ENCODE measurements at regions of chr11 and their contacts with region 1.

Region 1: GRCh38 chr11:33742249-33742851 is 6.1 kb upstream of the CD59 start:
- DNase-seq: no peak
- ATAC-seq: peak; percentile 76 to 82; a peak in 4 of 6 replicates
- H3K4me3 ChIP-seq: no peak overlapping the region
- H3K27ac ChIP-seq: peak overlapping the region; percentile 16; a peak in 2 of 6 replicates
- H3K4me1 ChIP-seq: peaks cover 21% of the 10 kb centered on the region
- CTCF ChIP-seq: peak; percentile 77
- EP300 ChIP-seq: no peak
- POLR2A ChIP-seq: no peak
- RAD21 ChIP-seq: peak; percentile 73 to 86

Region 2: GRCh38 chr11:33362051-33362910 is 380.1 kb before region 1 on chr11:
- CTCF ChIA-PET with region 1: interaction called, 23 read pairs
- POLR2A ChIA-PET with region 1: no interaction called
- DNase-seq: peak; percentile 15 to 47
- ATAC-seq: peak; percentile 33 to 75; a peak in 4 of 6 replicates
- H3K4me3 ChIP-seq: no peak overlapping the region
- H3K27ac ChIP-seq: no peak overlapping the region
- H3K4me1 ChIP-seq: no peaks in the 10 kb centered on the region
- CTCF ChIP-seq: peak; percentile 83
- EP300 ChIP-seq: no peak
- POLR2A ChIP-seq: no peak
- RAD21 ChIP-seq: peak; percentile 85 to 92

Region 3: DNA sequence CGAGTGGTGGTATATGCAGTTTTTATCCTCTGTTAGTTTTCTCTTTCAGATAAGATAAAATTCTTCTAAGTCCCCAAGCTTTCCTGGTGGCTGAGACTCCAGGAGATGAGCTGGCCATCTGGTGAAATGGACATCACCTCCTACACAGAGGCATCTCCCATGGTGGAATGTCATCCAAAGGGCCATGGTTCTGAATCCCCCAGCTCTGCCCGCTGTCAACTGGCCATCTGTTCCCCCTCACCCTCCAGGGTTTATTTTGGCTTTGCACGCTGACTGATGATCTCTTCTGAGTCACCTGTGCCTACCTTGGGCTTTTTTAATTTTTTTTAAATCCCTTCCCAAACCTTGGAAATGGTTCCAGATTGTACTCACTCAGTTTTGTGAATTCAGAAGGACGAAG is 342.9 kb before region 1 on chr11:
- CTCF ChIA-PET with region 1: no interaction called
- POLR2A ChIA-PET with region 1: no interaction called
- DNase-seq: no peak
- ATAC-seq: no peak
- H3K4me3 ChIP-seq: no peak overlapping the region
- H3K27ac ChIP-seq: no peak overlapping the region
- H3K4me1 ChIP-seq: no peaks in the 10 kb centered on the region
- CTCF ChIP-seq: no peak
- EP300 ChIP-seq: no peak
- POLR2A ChIP-seq: no peak
- RAD21 ChIP-seq: no peak

Region 4: DNA sequence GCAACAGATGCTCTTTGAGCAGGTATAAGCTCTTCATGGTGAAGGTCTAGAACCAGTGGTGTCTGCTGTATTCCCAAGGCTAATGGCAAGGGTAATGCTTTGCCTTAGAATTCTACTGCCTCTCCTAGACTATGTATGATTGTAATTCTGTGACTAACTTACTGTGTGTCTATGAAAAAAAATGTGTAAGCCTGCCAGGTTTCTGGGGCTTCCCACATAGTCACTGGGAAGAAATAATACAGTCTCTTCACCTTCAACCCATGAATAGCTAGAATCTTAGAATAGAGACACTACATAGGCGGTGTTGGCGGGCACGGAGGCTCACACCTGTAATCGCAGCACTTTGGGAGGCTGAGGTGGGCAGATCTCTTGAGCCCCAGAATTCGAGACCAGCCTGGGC is 125.8 kb before region 1 on chr11:
- CTCF ChIA-PET with region 1: no interaction called
- POLR2A ChIA-PET with region 1: no interaction called
- DNase-seq: no peak
- ATAC-seq: no peak
- H3K4me3 ChIP-seq: no peak overlapping the region
- H3K27ac ChIP-seq: no peak overlapping the region
- H3K4me1 ChIP-seq: no peaks in the 10 kb centered on the region
- CTCF ChIP-seq: no peak
- EP300 ChIP-seq: no peak
- POLR2A ChIP-seq: no peak
- RAD21 ChIP-seq: no peak

Region 5: GRCh38 chr11:33687733-33688479 is 54.4 kb before region 1 on chr11:
- CTCF ChIA-PET with region 1: interaction called, 45 read pairs
- POLR2A ChIA-PET with region 1: interaction called, 42 read pairs
- DNase-seq: peak; percentile 70 to 76
- ATAC-seq: no peak
- H3K4me3 ChIP-seq: no peak overlapping the region
- H3K27ac ChIP-seq: peak overlapping the region; percentile 94 to 96; a peak in 5 of 6 replicates
- H3K4me1 ChIP-seq: peaks cover 45% of the 10 kb centered on the region
- CTCF ChIP-seq: peak; percentile 92
- EP300 ChIP-seq: no peak
- POLR2A ChIP-seq: no peak
- RAD21 ChIP-seq: peak; percentile 98 to 99

Region 6: GRCh38 chr11:33700425-33701271 is 41.7 kb before region 1 on chr11 and contains the start of gene C11orf91:
- CTCF ChIA-PET with region 1: interaction called, 24 read pairs
- POLR2A ChIA-PET with region 1: interaction called, 8 read pairs
- DNase-seq: peak; percentile 70 to 93
- ATAC-seq: peak; percentile 77 to 85
- H3K4me3 ChIP-seq: peak within 1 kb of the TSS; percentile 52
- H3K27ac ChIP-seq: peak within 1 kb of the TSS; percentile 82 to 89
- H3K4me1 ChIP-seq: peaks cover 54% of the 10 kb centered on the region
- CTCF ChIP-seq: no peak
- EP300 ChIP-seq: no peak
- POLR2A ChIP-seq: 0 out of 2 replicates have a peak, but pooled peaks have one; percentile 16
- RAD21 ChIP-seq: no peak
- polyA plus RNA-seq, gene C11orf91: 0.42 TPM in 1 of 2 replicates, not detected in the other

Region 7: GRCh38 chr11:33716236-33716635 is 26.1 kb before region 1 on chr11:
- CTCF ChIA-PET with region 1: interaction called, 26 read pairs
- POLR2A ChIA-PET with region 1: interaction called, 22 read pairs
- DNase-seq: peak in 1 of 2 experiments; percentile 62
- ATAC-seq: peak; percentile 68 to 78; a peak in 5 of 6 replicates
- H3K4me3 ChIP-seq: no peak overlapping the region
- H3K27ac ChIP-seq: peak overlapping the region; percentile 39 to 42; a peak in 3 of 6 replicates
- H3K4me1 ChIP-seq: peaks cover 47% of the 10 kb centered on the region
- CTCF ChIP-seq: peak; percentile 57
- EP300 ChIP-seq: no peak
- POLR2A ChIP-seq: no peak
- RAD21 ChIP-seq: peak; percentile 59 to 65

Region 8: GRCh38 chr11:33753304-33753967 is 11.1 kb after region 1 on chr11:
- CTCF ChIA-PET with region 1: interaction called, 12 read pairs
- POLR2A ChIA-PET with region 1: no interaction called
- DNase-seq: no peak
- ATAC-seq: no peak
- H3K4me3 ChIP-seq: no peak overlapping the region
- H3K27ac ChIP-seq: no peak overlapping the region
- H3K4me1 ChIP-seq: peaks cover 3% of the 10 kb centered on the region; the same call in 1 of the 3 replicates
- CTCF ChIP-seq: no peak
- EP300 ChIP-seq: no peak
- POLR2A ChIP-seq: no peak
- RAD21 ChIP-seq: no peak